Ascending aorta (tissue), 2 donors: ENCODE measurements at regions of chr7 and their contacts with region 1.

Region 1: GRCh38 chr7:8217200-8218068 is 44.5 kb downstream of the ICA1 start:
- DNase-seq: no peak
- H3K4me3 ChIP-seq: no peak overlapping the region
- H3K27ac ChIP-seq: no peak overlapping the region
- H3K4me1 ChIP-seq: no peaks in the 10 kb centered on the region
- H3K27me3 ChIP-seq: no peaks in the 10 kb centered on the region
- CTCF ChIP-seq: peak; percentile 57 to 74 (median 64)

Region 2: DNA sequence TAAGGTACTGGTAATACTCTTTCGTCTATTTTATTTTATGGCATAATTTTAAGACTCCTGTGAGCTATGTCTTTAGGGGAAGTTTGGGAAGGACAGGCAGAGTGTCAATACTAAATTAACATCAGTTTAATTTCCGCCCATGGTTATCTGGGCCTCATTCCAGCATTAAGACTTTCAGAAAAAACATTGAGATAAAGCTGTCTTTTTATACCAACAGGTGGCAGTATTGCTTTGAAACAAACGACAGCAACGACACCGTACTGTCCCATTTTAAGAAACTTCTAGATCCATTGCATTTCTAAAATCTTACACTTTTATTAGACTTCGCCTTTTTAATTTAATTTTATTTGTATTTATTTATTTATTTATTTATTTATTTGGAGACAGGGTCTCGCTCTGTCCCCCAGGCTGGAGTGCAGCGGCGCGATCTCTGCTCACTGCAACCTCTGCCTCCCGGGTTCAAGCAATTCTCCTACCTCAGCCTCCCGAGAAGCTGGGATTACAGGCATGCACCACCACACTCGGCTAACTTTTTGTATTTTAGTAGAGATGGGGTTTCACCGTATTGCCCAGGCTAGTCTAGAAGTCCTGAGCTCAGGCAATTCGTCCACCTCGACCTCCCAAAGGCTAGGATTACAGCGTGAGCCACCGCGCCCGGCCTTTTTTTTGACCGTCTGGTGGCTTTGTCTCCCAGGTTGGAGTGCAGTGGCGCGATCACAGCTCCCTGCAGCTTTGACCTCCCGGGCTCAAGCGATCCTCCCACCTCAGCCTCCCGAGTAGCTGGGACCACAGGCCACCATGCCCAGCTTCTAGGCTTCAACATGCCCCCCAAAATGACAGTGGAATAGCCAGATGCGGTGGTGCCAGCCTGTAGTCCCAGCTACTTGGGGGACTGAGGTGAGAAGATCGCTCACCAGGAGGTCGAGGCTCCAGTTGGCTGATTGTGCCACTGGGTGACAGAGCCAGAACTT is 1113.8 kb before region 1 on chr7:
- intact Hi-C with region 1: loop called (anchors 10 kb)
- DNase-seq: no peak
- H3K4me3 ChIP-seq: peak overlapping the region; percentile 20 to 24
- H3K27ac ChIP-seq: no peak overlapping the region
- H3K4me1 ChIP-seq: no peaks in the 10 kb centered on the region
- H3K27me3 ChIP-seq: no peaks in the 10 kb centered on the region
- CTCF ChIP-seq: peak; percentile 38 to 56 (median 55)

Region 3: DNA sequence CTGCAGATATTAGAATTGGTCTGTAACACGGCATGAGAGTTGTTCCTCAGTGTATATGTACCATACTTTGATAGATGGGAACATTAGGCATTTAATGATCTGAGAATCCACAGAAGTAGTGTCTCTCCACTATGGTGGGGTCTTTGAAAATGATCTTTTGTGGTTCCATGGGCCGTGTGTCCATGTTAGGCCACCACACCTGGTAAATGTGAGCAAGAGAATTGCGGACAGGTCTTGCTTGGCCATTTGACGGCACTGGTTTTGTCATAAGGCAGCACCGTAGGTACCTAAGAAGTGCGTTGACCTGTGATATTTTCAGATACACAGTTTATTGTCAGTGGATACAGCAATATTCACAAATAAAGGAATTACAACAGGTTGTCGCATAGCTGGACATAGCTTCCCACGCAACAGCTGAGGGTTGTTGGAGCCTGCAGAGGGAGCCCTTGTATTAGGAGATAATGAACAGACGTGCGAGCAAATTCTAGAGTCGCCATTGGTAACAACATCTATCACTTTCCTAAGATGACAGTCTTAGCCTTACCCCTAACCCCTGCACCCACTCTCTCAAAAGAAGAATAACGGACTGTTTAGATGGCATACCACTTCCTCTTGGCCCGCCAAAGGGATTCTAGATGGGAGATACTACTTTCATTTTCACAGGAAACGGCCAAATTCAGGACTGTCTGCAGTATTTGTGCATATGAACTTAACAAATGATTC is 793.1 kb before region 1 on chr7:
- intact Hi-C with region 1: loop called (anchors 5 kb)
- DNase-seq: peak; percentile 11 to 71
- H3K4me3 ChIP-seq: peak overlapping the region; percentile 50 to 60
- H3K27ac ChIP-seq: no peak overlapping the region
- H3K4me1 ChIP-seq: no peaks in the 10 kb centered on the region
- H3K27me3 ChIP-seq: no peaks in the 10 kb centered on the region
- CTCF ChIP-seq: peak; percentile 47 to 70 (median 53)

Region 4: GRCh38 chr7:7595451-7595850 is 622.0 kb before region 1 on chr7:
- intact Hi-C with region 1: loop called (anchors 10 kb)
- DNase-seq: no peak
- H3K4me3 ChIP-seq: no peak overlapping the region
- H3K27ac ChIP-seq: no peak overlapping the region
- H3K4me1 ChIP-seq: no peaks in the 10 kb centered on the region
- H3K27me3 ChIP-seq: no peaks in the 10 kb centered on the region
- CTCF ChIP-seq: peak in 2 of 3 experiments; percentile 18 to 32

Region 5: GRCh38 chr7:7681179-7681935 is 536.1 kb before region 1 on chr7:
- intact Hi-C with region 1: loop called (anchors 5 kb)
- DNase-seq: no peak
- H3K4me3 ChIP-seq: peak overlapping the region in 1 of 2 donors; percentile 25
- H3K27ac ChIP-seq: peak overlapping the region; percentile 2 to 5
- H3K4me1 ChIP-seq: peaks cover 0 to 5% of the 10 kb centered on the region in 2 donors
- H3K27me3 ChIP-seq: no peaks in the 10 kb centered on the region
- CTCF ChIP-seq: peak; percentile 45 to 72 (median 55)

Region 6: DNA sequence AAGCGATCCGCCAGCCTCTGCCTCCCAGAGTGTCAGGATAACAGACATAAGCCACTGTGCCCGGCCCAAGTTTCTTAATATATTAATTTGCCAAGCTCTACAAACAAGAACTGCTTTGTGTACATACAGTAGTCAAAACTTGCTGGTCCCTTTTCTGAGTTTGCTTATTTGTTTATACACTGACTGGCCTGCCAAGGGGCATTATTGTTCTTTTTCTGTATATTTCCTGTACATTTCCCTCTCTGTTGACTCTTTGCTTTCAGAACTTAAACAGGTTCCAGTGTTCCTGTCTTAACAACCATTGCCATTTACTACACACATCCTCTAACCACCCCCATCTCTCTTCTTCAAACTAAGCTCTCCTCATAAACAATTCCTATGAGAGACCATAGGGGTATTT is 437.6 kb before region 1 on chr7:
- intact Hi-C with region 1: no loop called
- DNase-seq: no peak
- H3K4me3 ChIP-seq: no peak overlapping the region
- H3K27ac ChIP-seq: no peak overlapping the region
- H3K4me1 ChIP-seq: no peaks in the 10 kb centered on the region
- H3K27me3 ChIP-seq: no peaks in the 10 kb centered on the region
- CTCF ChIP-seq: no peak

Region 7: GRCh38 chr7:8084836-8085235 is 132.6 kb before region 1 on chr7:
- intact Hi-C with region 1: no loop called
- DNase-seq: no peak
- H3K4me3 ChIP-seq: no peak overlapping the region
- H3K27ac ChIP-seq: no peak overlapping the region
- H3K4me1 ChIP-seq: no peaks in the 10 kb centered on the region
- H3K27me3 ChIP-seq: no peaks in the 10 kb centered on the region
- CTCF ChIP-seq: no peak

Region 8: GRCh38 chr7:8511855-8512254 is 294.4 kb after region 1 on chr7:
- intact Hi-C with region 1: no loop called
- DNase-seq: no peak
- H3K4me3 ChIP-seq: no peak overlapping the region
- H3K27ac ChIP-seq: no peak overlapping the region
- H3K4me1 ChIP-seq: no peaks in the 10 kb centered on the region
- H3K27me3 ChIP-seq: no peaks in the 10 kb centered on the region
- CTCF ChIP-seq: no peak